ENCODE measurements at regions of chr2 and their contacts with region 1.

Region 1: DNA sequence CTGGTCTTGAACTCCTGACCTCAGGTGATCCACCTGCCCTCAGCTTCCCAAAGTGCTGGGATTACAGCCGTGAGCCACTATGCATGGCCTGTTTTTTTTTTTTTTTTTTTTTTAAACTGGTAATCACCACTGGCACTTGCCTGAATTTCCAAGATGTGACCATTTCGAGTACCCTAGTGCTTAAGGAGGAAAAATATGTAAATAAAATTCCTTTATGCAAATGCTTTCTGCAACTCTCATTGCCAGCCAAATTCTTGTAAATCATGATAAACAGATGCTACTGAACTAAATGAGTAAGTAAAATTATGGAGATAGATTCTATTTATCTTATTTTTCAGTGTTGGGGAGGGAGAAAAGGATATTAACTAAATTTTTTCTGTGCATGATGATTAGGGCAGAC is 18.6 kb downstream of the CDCA7 start:
- DNase-seq: no peak
- ATAC-seq: no peak
- H3K4me3 ChIP-seq: no peak overlapping the region
- H3K27ac ChIP-seq: no peak overlapping the region
- H3K4me1 ChIP-seq: no peaks in the 10 kb centered on the region
- H3K27me3 ChIP-seq: no peaks in the 10 kb centered on the region
- CTCF ChIP-seq: no peak

Region 2: DNA sequence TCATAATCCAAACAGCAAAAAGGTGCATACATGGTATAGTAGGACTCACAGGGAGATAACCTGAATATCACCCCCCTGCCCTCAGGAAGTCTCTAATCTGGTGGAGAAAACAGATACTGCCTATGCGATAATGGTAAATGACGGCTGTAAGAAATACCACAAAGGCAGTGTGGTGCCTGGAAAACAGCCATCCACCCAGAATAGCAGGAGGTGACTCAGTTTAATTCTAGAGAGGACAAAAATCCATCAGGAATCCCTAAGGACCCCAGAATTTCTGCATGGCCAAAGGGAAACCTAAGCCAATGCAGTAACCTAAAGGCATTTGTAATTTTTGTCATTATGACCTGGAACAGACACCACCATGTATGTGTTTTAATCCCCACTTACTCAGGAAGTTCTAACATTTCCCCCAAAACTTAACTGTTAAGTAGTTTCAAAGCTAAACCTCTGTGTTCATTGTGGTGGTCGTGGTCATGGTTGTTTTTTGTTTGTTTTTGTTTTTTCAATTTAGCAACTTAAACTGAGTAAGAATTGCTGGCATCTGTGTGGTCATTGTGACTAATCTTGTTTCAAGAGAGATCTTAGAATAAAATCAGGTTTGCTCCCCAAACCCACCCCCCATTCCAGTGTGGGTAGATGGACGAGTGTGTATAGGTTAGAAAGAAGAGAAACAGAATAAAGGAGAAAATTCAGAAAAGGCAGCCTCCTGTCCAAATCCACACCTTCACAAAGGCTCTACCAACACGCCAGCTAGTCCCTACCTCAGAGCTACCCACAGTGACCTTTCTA is 140.1 kb before region 1 on chr2:
- CTCF ChIA-PET with region 1: no interaction called
- POLR2A ChIA-PET with region 1: interaction called, 12 read pairs
- in situ Hi-C with region 1: no loop called
- intact Hi-C with region 1: no loop called
- DNase-seq: no peak
- ATAC-seq: no peak
- H3K4me3 ChIP-seq: no peak overlapping the region
- H3K27ac ChIP-seq: no peak overlapping the region
- H3K4me1 ChIP-seq: 0 out of 2 replicates have a peak, but pooled peaks cover 4% of the 10 kb centered on the region
- H3K27me3 ChIP-seq: no peaks in the 10 kb centered on the region
- CTCF ChIP-seq: no peak

Region 3: GRCh38 chr2:173323371-173323770 is 49.9 kb before region 1 on chr2:
- CTCF ChIA-PET with region 1: no interaction called
- POLR2A ChIA-PET with region 1: no interaction called
- in situ Hi-C with region 1: no loop called
- intact Hi-C with region 1: no loop called
- DNase-seq: no peak
- ATAC-seq: no peak
- H3K4me3 ChIP-seq: no peak overlapping the region
- H3K27ac ChIP-seq: no peak overlapping the region
- H3K4me1 ChIP-seq: no peaks in the 10 kb centered on the region
- H3K27me3 ChIP-seq: no peaks in the 10 kb centered on the region
- CTCF ChIP-seq: no peak